ENCODE measurements at regions of chr7 and their contacts with region 1.

Region 1: DNA sequence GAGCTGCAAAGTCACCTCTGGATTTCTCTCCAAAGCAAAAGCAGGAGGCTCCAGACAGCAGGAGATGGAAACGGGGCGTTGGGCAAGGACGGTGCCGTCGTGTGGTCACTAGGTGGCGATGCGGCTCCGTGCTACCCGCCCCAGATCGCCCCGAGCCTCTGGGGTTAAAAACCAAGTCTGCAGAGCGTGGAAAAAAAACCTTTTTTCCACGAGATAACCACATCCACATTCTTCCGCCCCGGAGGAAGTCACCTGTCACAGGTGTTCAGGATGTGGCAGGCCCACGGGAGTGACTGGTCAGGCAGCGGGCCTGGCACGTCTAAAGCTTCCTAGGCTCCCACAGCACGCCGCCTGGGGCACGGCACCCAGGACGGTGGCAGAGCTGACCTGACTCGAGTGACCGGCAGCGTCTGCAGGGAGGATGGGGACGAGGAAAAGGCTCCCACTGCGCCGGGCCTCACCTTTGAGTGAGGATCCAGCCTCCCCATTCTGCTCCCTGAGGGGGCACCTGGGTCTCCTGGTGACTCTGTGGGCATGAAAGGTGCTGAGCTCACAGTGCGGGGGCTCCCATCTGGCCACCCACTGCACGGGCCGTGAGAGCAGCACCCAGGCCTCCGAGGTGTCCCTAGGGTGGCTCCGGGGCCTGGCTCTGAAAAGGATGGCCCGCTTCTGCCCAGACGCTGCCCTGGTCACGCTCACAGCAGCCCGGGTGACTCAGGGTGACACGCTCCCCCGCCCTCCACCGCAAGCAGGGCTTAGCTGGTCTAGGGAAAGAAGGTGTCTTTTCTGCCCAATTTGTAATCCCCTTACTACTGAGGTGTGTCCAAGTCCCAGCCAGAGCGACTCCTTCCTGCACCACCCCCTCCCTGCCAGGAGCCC is 71.3 kb upstream of the TNRC18 start:
- DNase-seq: peak; percentile 95
- H3K4me3 ChIP-seq: peak overlapping the region; percentile 42 to 53 (median 48)
- H3K27ac ChIP-seq: peak overlapping the region; percentile 78 to 83 (median 80)
- H3K4me1 ChIP-seq: peaks cover 27 to 47% (median 45%) of the 10 kb centered on the region in 4 donors
- H3K27me3 ChIP-seq: no peaks in the 10 kb centered on the region
- CTCF ChIP-seq: peak; percentile 92 to 96 (median 96)
- EP300 ChIP-seq: no peak
- POLR2A ChIP-seq: no peak

Region 2: GRCh38 chr7:5557920-5558401 is 63.0 kb after region 1 on chr7:
- intact Hi-C with region 1: loop called (anchors 2 kb)
- DNase-seq: no peak
- H3K4me3 ChIP-seq: peak overlapping the region; percentile 67 to 77 (median 68)
- H3K27ac ChIP-seq: peak overlapping the region; percentile 95 to 99 (median 98)
- H3K4me1 ChIP-seq: peaks cover 55 to 85% (median 82%) of the 10 kb centered on the region in 4 donors
- H3K27me3 ChIP-seq: no peaks in the 10 kb centered on the region
- CTCF ChIP-seq: no peak
- EP300 ChIP-seq: no peak
- POLR2A ChIP-seq: no peak

Region 3: GRCh38 chr7:5665094-5666025 is 170.4 kb after region 1 on chr7:
- intact Hi-C with region 1: loop called (anchors 5 kb)
- DNase-seq: peak; percentile 96
- H3K4me3 ChIP-seq: no peak overlapping the region
- H3K27ac ChIP-seq: peak overlapping the region; percentile 29 to 96 (median 74)
- H3K4me1 ChIP-seq: peaks cover 15 to 87% (median 67%) of the 10 kb centered on the region in 4 donors
- H3K27me3 ChIP-seq: no peaks in the 10 kb centered on the region
- CTCF ChIP-seq: peak; percentile 83 to 91 (median 90)
- EP300 ChIP-seq: no peak
- POLR2A ChIP-seq: no peak

Region 4: GRCh38 chr7:5704534-5704922 is 209.6 kb after region 1 on chr7:
- intact Hi-C with region 1: loop called (anchors 5 kb)
- DNase-seq: peak; percentile 95
- H3K4me3 ChIP-seq: no peak overlapping the region
- H3K27ac ChIP-seq: peak overlapping the region; percentile 91 to 96 (median 92)
- H3K4me1 ChIP-seq: peaks cover 48 to 52% (median 50%) of the 10 kb centered on the region in 4 donors
- H3K27me3 ChIP-seq: no peaks in the 10 kb centered on the region
- CTCF ChIP-seq: peak in 2 of 3 experiments; percentile 93 to 96
- EP300 ChIP-seq: no peak
- POLR2A ChIP-seq: no peak

Measured in esophagus muscularis mucosa (tissue), 4 donors.